ENCODE measurements at regions of chr11 and their contacts with region 1.

Region 1: DNA sequence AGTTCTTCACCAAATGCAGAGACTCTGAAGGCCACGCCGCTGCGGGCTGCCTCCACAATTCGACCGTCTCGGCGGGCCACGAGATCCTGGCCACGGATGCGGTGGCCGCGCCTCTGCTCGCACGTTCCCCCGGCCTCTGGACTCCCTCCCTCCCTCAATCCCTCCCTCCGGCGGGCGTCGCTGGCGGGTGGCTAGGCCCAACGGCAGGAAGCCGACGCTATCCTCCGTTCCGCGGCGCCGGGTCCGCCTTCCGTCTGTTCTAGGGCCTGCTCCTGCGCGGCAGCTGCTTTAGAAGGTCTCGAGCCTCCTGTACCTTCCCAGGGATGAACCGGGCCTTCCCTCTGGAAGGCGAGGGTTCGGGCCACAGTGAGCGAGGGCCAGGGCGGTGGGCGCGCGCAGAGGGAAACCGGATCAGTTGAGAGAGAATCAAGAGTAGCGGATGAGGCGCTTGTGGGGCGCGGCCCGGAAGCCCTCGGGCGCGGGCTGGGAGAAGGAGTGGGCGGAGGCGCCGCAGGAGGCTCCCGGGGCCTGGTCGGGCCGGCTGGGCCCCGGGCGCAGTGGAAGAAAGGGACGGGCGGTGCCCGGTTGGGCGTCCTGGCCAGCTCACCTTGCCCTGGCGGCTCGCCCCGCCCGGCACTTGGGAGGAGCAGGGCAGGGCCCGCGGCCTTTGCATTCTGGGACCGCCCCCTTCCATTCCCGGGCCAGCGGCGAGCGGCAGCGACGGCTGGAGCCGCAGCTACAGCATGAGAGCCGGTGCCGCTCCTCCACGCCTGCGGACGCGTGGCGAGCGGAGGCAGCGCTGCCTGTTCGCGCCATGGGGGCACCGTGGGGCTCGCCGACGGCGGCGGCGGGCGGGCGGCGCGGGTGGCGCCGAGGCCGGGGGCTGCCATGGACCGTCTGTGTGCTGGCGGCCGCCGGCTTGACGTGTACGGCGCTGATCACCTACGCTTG is at the start of gene FUT4:
- DNase-seq: peak; percentile 26 to 82 (median 69)
- ATAC-seq: peak; percentile 76
- H3K4me3 ChIP-seq: peak within 1 kb of the TSS; percentile 65 to 77
- H3K4me3 Mint-ChIP-seq: peak within 1 kb of the TSS; percentile 99
- H3K27ac ChIP-seq: peak within 1 kb of the TSS; percentile 87 to 90
- H3K27ac Mint-ChIP-seq: peak within 1 kb of the TSS; percentile 100
- H3K4me1 ChIP-seq: peaks cover 22% of the 10 kb centered on the region
- H3K4me1 Mint-ChIP-seq: peaks cover 39% of the 10 kb centered on the region
- H3K27me3 ChIP-seq: no peaks in the 10 kb centered on the region
- H3K27me3 Mint-ChIP-seq: no peaks in the 10 kb centered on the region
- CTCF ChIP-seq: no peak
- total RNA-seq, gene FUT4: 4.7 to 5.2 TPM

Region 2: DNA sequence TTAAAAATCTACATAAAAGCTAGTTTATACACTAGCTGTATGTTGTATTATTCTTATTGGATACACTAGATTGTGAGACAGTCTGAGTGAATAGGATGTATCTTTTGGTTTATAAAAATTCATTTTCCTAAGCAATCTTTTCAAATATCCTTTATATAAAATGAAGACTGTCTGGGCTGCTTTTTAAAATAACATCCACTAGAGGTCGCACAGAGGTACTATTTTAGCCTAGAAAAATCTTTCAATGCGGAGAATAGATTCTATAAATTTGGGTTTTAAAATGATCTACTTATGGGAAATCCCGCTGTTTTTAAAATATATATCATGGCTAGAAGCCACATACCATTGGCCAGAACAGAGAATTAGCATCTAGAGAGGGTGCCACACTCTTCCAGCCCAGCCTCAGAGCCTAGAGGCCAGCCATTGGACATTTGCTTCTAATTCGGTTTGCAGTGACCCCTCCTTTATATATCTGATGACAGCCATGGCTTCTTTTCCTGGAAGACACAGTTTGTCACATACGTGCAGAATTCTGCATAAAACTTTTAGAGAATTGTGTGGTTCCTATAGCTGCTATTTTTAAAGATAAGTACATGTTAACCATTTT is 24.4 kb before region 1 on chr11:
- CTCF ChIA-PET with region 1: interaction called, 3 read pairs
- POLR2A ChIA-PET with region 1: no interaction called
- intact Hi-C with region 1: loop called in 1 of 2 experiments (anchors 2 kb)
- DNase-seq: peak in 3 of 9 experiments; percentile 12 to 56 (median 45)
- ATAC-seq: peak; percentile 49
- H3K4me3 ChIP-seq: no peak overlapping the region
- H3K4me3 Mint-ChIP-seq: no peak overlapping the region
- H3K27ac ChIP-seq: no peak overlapping the region
- H3K27ac Mint-ChIP-seq: no peak overlapping the region
- H3K4me1 ChIP-seq: no peaks in the 10 kb centered on the region
- H3K4me1 Mint-ChIP-seq: no peaks in the 10 kb centered on the region
- H3K27me3 ChIP-seq: no peaks in the 10 kb centered on the region
- H3K27me3 Mint-ChIP-seq: peaks cover 9% of the 10 kb centered on the region
- CTCF ChIP-seq: peak; percentile 72

Region 3: GRCh38 chr11:95089620-95090542 is 545.9 kb after region 1 on chr11 and contains the start of gene ENDOD1:
- CTCF ChIA-PET with region 1: no interaction called
- POLR2A ChIA-PET with region 1: no interaction called
- intact Hi-C with region 1: loop called in 1 of 2 experiments (anchors 2 kb)
- DNase-seq: peak; percentile 75 to 92 (median 83)
- ATAC-seq: peak; percentile 94
- H3K4me3 ChIP-seq: peak within 1 kb of the TSS; percentile 66 to 78
- H3K4me3 Mint-ChIP-seq: peak within 1 kb of the TSS; percentile 93
- H3K27ac ChIP-seq: peak within 1 kb of the TSS; percentile 77 to 84
- H3K27ac Mint-ChIP-seq: peak within 1 kb of the TSS; percentile 99
- H3K4me1 ChIP-seq: peaks cover 25% of the 10 kb centered on the region
- H3K4me1 Mint-ChIP-seq: peaks cover 50% of the 10 kb centered on the region
- H3K27me3 ChIP-seq: no peaks in the 10 kb centered on the region
- H3K27me3 Mint-ChIP-seq: no peaks in the 10 kb centered on the region
- CTCF ChIP-seq: no peak
- total RNA-seq, gene ENDOD1: 5.6 to 5.9 TPM

Measured in CD8-positive, alpha-beta T cell (primary cell).